GM12878 (cell line): ENCODE measurements at regions of chr17 and their contacts with region 1.

Region 1: DNA sequence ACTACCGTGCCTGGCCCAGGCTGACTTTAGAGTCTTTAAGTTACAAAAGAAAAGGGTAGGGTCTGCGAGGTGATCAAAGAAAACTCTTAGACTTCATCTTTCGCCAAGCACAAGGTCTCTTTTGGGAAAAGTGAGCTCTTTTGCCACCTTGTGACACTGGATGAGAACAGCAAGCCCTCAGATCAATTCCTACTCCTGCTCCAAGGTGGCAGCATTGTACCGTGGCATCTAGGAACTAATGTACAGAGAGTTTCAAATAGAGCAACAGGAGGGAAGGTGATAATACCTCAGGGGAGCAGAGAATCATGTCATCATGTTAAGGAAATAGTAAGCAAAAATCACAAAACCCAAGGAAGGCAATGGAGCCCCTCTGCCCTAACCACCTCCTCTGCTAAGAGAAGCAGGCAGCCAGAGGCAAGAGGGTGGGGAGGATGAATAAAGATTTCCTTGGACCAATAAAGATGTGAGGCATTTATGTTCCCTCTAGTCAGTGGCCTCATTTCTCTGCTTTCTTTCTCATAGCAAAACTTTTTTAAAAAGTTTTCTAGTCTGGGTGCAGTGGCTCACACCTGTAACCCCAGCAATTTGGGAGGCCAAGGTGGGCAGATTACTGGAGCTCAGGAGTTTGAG is 2.1 kb upstream of the C17orf78 start:
- DNase-seq: no peak
- ATAC-seq: peak; percentile 99
- H3K4me3 ChIP-seq: no peak overlapping the region
- H3K27ac ChIP-seq: no peak overlapping the region
- H3K4me1 ChIP-seq: no peaks in the 10 kb centered on the region
- H3K27me3 ChIP-seq: no peaks in the 10 kb centered on the region
- CTCF ChIP-seq: peak; percentile 99 to 100 (median 100); a peak in 5 of 6 replicates
- EP300 ChIP-seq: no peak
- POLR2A ChIP-seq: no peak
- RAD21 ChIP-seq: peak; percentile 100

Region 2: DNA sequence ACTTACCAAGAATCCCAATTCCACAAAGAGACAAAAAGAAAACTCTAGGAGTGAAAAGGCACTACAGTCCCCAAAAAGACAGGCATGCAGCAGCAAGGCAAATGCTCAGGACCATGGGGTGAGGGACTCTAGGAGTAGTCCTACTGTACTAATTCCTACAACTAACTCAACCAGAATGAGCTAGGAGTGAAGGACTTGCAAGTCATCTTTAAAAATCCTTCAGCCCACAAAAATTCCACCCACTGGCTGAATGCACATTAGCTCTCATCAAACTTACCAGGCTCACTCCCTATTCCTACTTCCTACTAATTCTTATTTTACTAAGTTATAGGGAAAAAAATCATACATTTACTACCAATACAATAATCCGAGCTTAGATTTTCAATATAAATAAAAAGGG is 139.5 kb before region 1 on chr17:
- CTCF ChIA-PET with region 1: interaction called, 10 read pairs
- POLR2A ChIA-PET with region 1: no interaction called
- RAD21 ChIA-PET with region 1: no interaction called
- SMC1A ChIA-PET with region 1: no interaction called
- in situ Hi-C with region 1: no loop called
- intact Hi-C with region 1: no loop called
- DNase-seq: no peak
- ATAC-seq: no peak
- H3K4me3 ChIP-seq: no peak overlapping the region
- H3K27ac ChIP-seq: no peak overlapping the region
- H3K4me1 ChIP-seq: no peaks in the 10 kb centered on the region
- H3K27me3 ChIP-seq: no peaks in the 10 kb centered on the region
- CTCF ChIP-seq: no peak
- EP300 ChIP-seq: no peak
- POLR2A ChIP-seq: no peak
- RAD21 ChIP-seq: no peak

Region 3: DNA sequence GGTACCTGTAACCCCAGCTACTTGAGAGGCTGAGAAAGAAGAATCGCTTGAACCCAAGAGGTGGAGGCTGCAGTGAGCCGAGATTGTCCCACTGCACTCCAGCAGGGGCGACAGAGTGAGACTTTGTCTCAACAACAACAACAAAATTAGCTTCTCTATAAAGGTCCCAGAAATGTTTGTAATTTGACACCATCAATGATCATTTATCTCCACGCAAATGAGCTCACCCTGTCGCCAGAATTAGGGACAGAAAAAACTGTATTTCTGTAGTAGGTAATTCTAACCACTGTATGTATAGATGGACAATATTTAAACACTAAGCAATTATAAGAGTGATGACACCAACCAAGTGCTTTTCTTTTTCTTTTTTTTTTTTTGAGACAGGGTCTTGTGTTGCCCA is 12.8 kb after region 1 on chr17:
- CTCF ChIA-PET with region 1: interaction called, 54 read pairs
- POLR2A ChIA-PET with region 1: no interaction called
- RAD21 ChIA-PET with region 1: interaction called, 65 read pairs
- SMC1A ChIA-PET with region 1: interaction called, 81 read pairs
- in situ Hi-C with region 1: no loop called
- intact Hi-C with region 1: no loop called
- DNase-seq: no peak
- ATAC-seq: no peak
- H3K4me3 ChIP-seq: no peak overlapping the region
- H3K27ac ChIP-seq: no peak overlapping the region
- H3K4me1 ChIP-seq: peaks cover 10% of the 10 kb centered on the region
- H3K27me3 ChIP-seq: no peaks in the 10 kb centered on the region
- CTCF ChIP-seq: no peak
- EP300 ChIP-seq: no peak
- POLR2A ChIP-seq: no peak
- RAD21 ChIP-seq: no peak

Region 4: GRCh38 chr17:37406635-37407461 is 33.2 kb after region 1 on chr17 and contains the starts of genes ACACA and TADA2A:
- CTCF ChIA-PET with region 1: interaction called, 187 read pairs
- POLR2A ChIA-PET with region 1: interaction called, 6 read pairs
- RAD21 ChIA-PET with region 1: interaction called, 11 read pairs
- SMC1A ChIA-PET with region 1: interaction called, 14 read pairs
- in situ Hi-C with region 1: no loop called
- intact Hi-C with region 1: no loop called
- DNase-seq: no peak
- ATAC-seq: peak; percentile 95
- H3K4me3 ChIP-seq: peak within 1 kb of the TSS; percentile 96
- H3K27ac ChIP-seq: peak within 1 kb of the TSS; percentile 95
- H3K4me1 ChIP-seq: peaks cover 21% of the 10 kb centered on the region
- H3K27me3 ChIP-seq: no peaks in the 10 kb centered on the region
- CTCF ChIP-seq: no peak
- EP300 ChIP-seq: no peak
- POLR2A ChIP-seq: peak; percentile 84
- RAD21 ChIP-seq: no peak
- polyA plus RNA-seq, gene ACACA: 12.9 to 14.7 TPM
- polyA plus RNA-seq, gene TADA2A: 39.9 to 43.8 TPM

Region 5: GRCh38 chr17:37592291-37592690 is 218.6 kb after region 1 on chr17:
- CTCF ChIA-PET with region 1: no interaction called
- POLR2A ChIA-PET with region 1: no interaction called
- RAD21 ChIA-PET with region 1: no interaction called
- SMC1A ChIA-PET with region 1: no interaction called
- in situ Hi-C with region 1: no loop called
- intact Hi-C with region 1: no loop called
- DNase-seq: no peak
- ATAC-seq: no peak
- H3K4me3 ChIP-seq: no peak overlapping the region
- H3K27ac ChIP-seq: no peak overlapping the region
- H3K4me1 ChIP-seq: no peaks in the 10 kb centered on the region
- H3K27me3 ChIP-seq: no peaks in the 10 kb centered on the region
- CTCF ChIP-seq: no peak
- EP300 ChIP-seq: no peak
- POLR2A ChIP-seq: no peak
- RAD21 ChIP-seq: no peak

Region 6: GRCh38 chr17:37609170-37610040 is 235.8 kb after region 1 on chr17 and contains the start of gene SYNRG:
- CTCF ChIA-PET with region 1: interaction called, 11 read pairs
- POLR2A ChIA-PET with region 1: interaction called, 4 read pairs
- RAD21 ChIA-PET with region 1: interaction called, 15 read pairs
- SMC1A ChIA-PET with region 1: interaction called, 4 read pairs
- in situ Hi-C with region 1: no loop called
- intact Hi-C with region 1: no loop called
- DNase-seq: peak; percentile 81
- ATAC-seq: peak; percentile 93
- H3K4me3 ChIP-seq: peak within 1 kb of the TSS; percentile 78
- H3K27ac ChIP-seq: peak within 1 kb of the TSS; percentile 89
- H3K4me1 ChIP-seq: peaks cover 8% of the 10 kb centered on the region; the same call in 1 of the 2 replicates
- H3K27me3 ChIP-seq: no peaks in the 10 kb centered on the region
- CTCF ChIP-seq: peak; percentile 42 to 49 (median 47); a peak in 4 of 6 replicates
- EP300 ChIP-seq: 0 out of 4 replicates have a peak, but pooled peaks of 1 of the 2 experiments have one; percentile 9
- POLR2A ChIP-seq: peak; percentile 97
- RAD21 ChIP-seq: peak; percentile 23; the same call in 1 of the 2 replicates
- polyA plus RNA-seq, gene SYNRG: 5.2 to 5.8 TPM

Region 7: DNA sequence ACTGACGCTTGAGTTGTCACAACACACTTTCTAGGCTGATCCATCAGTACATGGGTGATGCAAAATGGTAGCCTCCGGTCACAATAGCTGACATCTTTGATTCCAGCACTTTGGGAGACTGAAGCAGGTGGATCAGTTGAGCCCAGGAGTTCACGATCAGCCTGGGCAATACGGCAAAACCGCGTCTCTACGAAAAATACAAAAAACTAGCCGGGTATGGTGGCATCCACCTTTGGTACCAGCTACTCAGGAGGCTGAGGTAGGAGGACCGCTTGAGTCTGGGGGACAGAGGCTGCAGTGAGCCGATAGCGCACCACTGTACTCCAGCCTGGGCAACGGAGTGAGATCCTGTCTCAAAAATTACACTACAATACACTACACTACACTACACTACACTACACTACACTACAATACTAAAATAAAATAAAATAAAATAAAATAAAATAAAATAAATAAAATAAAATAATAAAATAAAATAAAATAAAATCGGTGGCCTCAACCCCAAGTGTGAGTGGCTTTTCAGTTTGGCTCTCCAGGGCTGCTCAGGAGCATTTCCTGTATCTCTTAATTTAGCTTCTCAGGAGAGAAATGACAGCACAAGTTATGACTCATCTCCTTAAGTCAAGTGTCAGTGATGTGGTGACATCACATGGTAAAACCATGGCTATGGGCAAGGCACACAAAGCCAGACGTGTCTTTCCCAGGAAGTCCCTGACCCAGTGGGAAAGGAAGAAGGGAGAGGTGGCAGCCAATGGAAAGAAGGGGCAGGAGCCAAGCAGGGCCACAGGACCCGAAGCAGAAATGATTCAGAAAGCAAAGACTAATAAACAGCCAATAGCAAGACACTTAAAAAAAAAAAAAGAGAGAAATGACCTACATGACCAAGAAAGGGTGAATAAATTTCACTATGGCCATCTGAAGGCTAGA is 475.3 kb after region 1 on chr17:
- CTCF ChIA-PET with region 1: no interaction called
- POLR2A ChIA-PET with region 1: no interaction called
- RAD21 ChIA-PET with region 1: no interaction called
- SMC1A ChIA-PET with region 1: no interaction called
- in situ Hi-C with region 1: no loop called
- intact Hi-C with region 1: no loop called
- DNase-seq: peak; percentile 79
- ATAC-seq: peak; percentile 90
- H3K4me3 ChIP-seq: no peak overlapping the region
- H3K27ac ChIP-seq: peak overlapping the region; percentile 57
- H3K4me1 ChIP-seq: peaks cover 32% of the 10 kb centered on the region
- H3K27me3 ChIP-seq: no peaks in the 10 kb centered on the region
- CTCF ChIP-seq: no peak; a peak in 1 of 6 replicates
- EP300 ChIP-seq: peak; percentile 68 to 72
- POLR2A ChIP-seq: no peak
- RAD21 ChIP-seq: no peak

Region 8: GRCh38 chr17:38853292-38854219 is 1479.9 kb after region 1 on chr17 and contains the start of gene RPL23:
- CTCF ChIA-PET with region 1: no interaction called
- POLR2A ChIA-PET with region 1: no interaction called
- RAD21 ChIA-PET with region 1: no interaction called
- SMC1A ChIA-PET with region 1: no interaction called
- in situ Hi-C with region 1: no loop called
- intact Hi-C with region 1: no loop called
- DNase-seq: peak; percentile 87
- ATAC-seq: peak; percentile 85
- H3K4me3 ChIP-seq: peak within 1 kb of the TSS; percentile 88
- H3K27ac ChIP-seq: peak within 1 kb of the TSS; percentile 95
- H3K4me1 ChIP-seq: peaks cover 18% of the 10 kb centered on the region
- H3K27me3 ChIP-seq: no peaks in the 10 kb centered on the region
- CTCF ChIP-seq: no peak
- EP300 ChIP-seq: peak in 1 of 2 experiments; percentile 51; a peak in 1 of 4 replicates
- POLR2A ChIP-seq: peak; percentile 99
- RAD21 ChIP-seq: no peak
- polyA plus RNA-seq, gene RPL23: 3,319 to 3,754 TPM